Adrenal gland (tissue), 19 donors: ENCODE measurements at regions of chr4 and their contacts with region 1.

Region 1: GRCh38 chr4:174365018-174365587 is 81.4 kb downstream of the CEP44 start:
- DNase-seq: peak in 4 of 7 donors; percentile 22 to 37 (median 26)
- H3K4me3 ChIP-seq: no peak overlapping the region
- H3K27ac ChIP-seq: no peak overlapping the region
- H3K4me1 ChIP-seq: no peaks in the 10 kb centered on the region
- H3K27me3 ChIP-seq: no peaks in the 10 kb centered on the region
- CTCF ChIP-seq: peak; percentile 30 to 70 (median 54)
- POLR2A ChIP-seq: no peak

Region 2: DNA sequence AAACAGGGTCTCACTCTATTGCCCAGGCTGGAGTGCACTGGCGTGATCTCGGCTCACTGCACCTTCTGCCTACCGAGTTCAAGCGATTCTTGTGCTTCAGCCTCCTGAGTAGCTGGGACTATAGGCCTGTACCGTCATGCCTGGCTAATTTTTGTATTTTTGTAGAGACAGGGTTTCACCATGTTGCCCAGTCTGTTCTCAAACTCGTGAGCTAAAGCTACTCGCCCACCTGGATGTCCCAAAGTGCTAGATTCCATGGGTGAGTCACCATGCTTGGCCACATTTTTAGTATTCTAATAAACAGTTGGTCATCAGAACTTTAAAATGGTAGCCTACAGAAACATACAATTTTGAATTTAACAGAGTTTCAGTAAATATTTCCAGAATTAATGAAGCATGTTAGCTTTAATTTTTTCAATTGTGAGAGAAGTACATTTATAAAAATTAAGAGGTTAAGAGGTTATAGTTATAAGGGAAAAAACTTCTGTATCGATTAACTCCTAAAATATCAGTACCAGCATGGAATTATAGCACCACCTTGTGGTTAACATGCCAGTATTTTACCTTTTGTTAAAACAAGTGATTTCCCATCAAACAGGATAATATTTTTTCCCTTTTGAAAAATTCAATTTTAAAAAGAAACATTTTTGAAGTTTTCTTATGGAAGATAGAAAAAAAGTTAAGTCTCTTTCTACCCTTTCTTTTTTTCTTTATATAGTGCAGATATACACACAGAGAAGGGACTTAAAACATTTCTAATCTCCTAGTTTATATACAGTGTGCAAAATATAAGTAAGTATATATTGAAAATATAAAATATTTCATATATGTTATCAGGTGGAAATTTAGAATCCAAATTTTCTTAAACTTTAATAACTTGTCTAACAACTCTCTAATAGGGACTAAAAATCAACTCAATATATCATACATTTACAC is 46.0 kb before region 1 on chr4:
- intact Hi-C with region 1: no loop called
- DNase-seq: no peak
- H3K4me3 ChIP-seq: no peak overlapping the region
- H3K27ac ChIP-seq: no peak overlapping the region
- H3K4me1 ChIP-seq: no peaks in the 10 kb centered on the region
- H3K27me3 ChIP-seq: no peaks in the 10 kb centered on the region
- CTCF ChIP-seq: peak; percentile 59 to 88 (median 77)
- POLR2A ChIP-seq: no peak

Region 3: GRCh38 chr4:174714393-174715211 is 349.5 kb after region 1 on chr4:
- intact Hi-C with region 1: loop called in 1 of 2 experiments (anchors 5 kb)
- DNase-seq: peak; percentile 17 to 57 (median 33)
- H3K4me3 ChIP-seq: no peak overlapping the region
- H3K27ac ChIP-seq: no peak overlapping the region
- H3K4me1 ChIP-seq: no peaks in the 10 kb centered on the region
- H3K27me3 ChIP-seq: no peaks in the 10 kb centered on the region
- CTCF ChIP-seq: peak in 5 of 6 experiments; percentile 24 to 65 (median 57)
- POLR2A ChIP-seq: no peak